ENCODE measurements at regions of chr18 and their contacts with region 1.

Region 1: GRCh38 chr18:62239475-62239874 is 52.4 kb downstream of the RELCH start:
- DNase-seq: no peak
- ATAC-seq: no peak
- H3K4me3 ChIP-seq: no peak overlapping the region
- H3K4me3 Mint-ChIP-seq: no peak overlapping the region
- H3K27ac ChIP-seq: no peak overlapping the region
- H3K27ac Mint-ChIP-seq: no peak overlapping the region
- H3K4me1 ChIP-seq: no peaks in the 10 kb centered on the region
- H3K4me1 Mint-ChIP-seq: peaks cover 2% of the 10 kb centered on the region
- H3K27me3 ChIP-seq: no peaks in the 10 kb centered on the region
- H3K27me3 Mint-ChIP-seq: no peaks in the 10 kb centered on the region
- CTCF ChIP-seq: no peak

Region 2: DNA sequence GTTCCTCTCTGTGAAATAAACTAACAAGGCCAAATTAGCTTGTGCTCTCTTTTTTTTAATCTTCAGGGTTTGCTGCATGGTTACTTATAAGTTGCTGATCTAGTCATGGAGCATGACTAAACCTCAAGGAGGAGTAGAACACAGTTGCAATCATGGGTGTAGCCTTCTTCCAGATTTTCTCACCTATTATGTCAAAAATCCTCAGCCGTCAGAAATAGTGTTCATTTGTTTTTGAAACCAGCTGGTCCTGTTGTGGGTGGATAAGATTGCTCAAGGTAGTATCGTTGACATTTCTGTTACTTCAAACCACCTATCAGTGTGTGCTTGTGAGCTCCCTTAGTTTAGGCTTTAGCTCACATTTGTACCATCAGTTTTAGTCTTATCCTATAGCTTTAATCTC is 41.2 kb before region 1 on chr18:
- CTCF ChIA-PET with region 1: no interaction called
- POLR2A ChIA-PET with region 1: no interaction called
- intact Hi-C with region 1: loop called (anchors 5 kb)
- DNase-seq: no peak
- ATAC-seq: no peak
- H3K4me3 ChIP-seq: no peak overlapping the region
- H3K4me3 Mint-ChIP-seq: no peak overlapping the region
- H3K27ac ChIP-seq: no peak overlapping the region
- H3K27ac Mint-ChIP-seq: no peak overlapping the region
- H3K4me1 ChIP-seq: peaks cover 0 to 4% of the 10 kb centered on the region in 2 donors
- H3K4me1 Mint-ChIP-seq: peaks cover 52% of the 10 kb centered on the region
- H3K27me3 ChIP-seq: no peaks in the 10 kb centered on the region
- H3K27me3 Mint-ChIP-seq: no peaks in the 10 kb centered on the region
- CTCF ChIP-seq: no peak

Region 3: DNA sequence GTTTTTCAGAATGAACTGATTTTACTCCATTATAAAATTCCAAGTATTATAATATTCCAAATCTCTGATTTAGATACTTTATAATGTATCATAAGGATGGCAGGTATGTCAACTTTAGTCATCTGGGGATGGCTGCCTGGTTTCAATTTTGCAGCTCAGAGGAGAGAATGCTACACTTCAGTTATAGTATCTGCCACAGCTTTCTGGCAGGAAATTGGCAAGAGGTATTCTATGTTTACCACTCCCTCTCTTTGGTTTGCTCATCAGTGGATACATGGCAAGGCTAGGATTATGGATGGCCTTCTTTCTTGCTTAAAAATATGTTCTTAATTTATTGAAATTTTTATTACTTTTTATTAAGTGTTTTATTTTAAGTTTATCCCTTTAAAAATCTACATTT is 18.6 kb after region 1 on chr18:
- CTCF ChIA-PET with region 1: no interaction called
- POLR2A ChIA-PET with region 1: no interaction called
- intact Hi-C with region 1: no loop called
- DNase-seq: no peak
- ATAC-seq: no peak
- H3K4me3 ChIP-seq: no peak overlapping the region
- H3K4me3 Mint-ChIP-seq: no peak overlapping the region
- H3K27ac ChIP-seq: no peak overlapping the region
- H3K27ac Mint-ChIP-seq: no peak overlapping the region
- H3K4me1 ChIP-seq: peaks cover 0 to 5% of the 10 kb centered on the region in 2 donors
- H3K4me1 Mint-ChIP-seq: peaks cover 13% of the 10 kb centered on the region
- H3K27me3 ChIP-seq: no peaks in the 10 kb centered on the region
- H3K27me3 Mint-ChIP-seq: no peaks in the 10 kb centered on the region
- CTCF ChIP-seq: no peak

Region 4: DNA sequence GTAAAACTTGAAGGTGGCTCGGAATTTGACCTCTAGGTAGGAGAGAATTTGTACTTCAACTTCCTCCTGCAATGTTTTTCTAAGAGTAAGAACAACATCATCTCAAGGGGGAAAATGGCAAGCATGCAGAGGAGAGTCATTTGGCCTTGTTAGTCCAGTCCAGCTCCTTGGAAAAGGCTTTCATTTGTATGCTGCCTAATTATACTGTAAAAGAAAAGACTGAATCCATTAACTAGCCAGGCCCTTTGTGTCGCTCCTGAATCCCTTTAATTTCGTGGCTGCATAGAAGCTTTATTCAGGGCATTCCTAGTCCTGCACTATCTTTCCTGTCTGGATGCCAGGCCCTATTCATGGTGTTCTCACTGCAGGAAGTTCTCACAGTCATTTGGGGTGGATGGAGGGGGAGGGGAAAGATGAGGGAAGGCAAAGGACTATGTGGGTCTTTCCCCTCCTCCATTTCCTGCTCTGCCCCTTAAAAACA is 511.9 kb after region 1 on chr18:
- CTCF ChIA-PET with region 1: no interaction called
- POLR2A ChIA-PET with region 1: no interaction called
- intact Hi-C with region 1: no loop called
- DNase-seq: no peak
- ATAC-seq: no peak
- H3K4me3 ChIP-seq: no peak overlapping the region
- H3K4me3 Mint-ChIP-seq: no peak overlapping the region
- H3K27ac ChIP-seq: no peak overlapping the region
- H3K27ac Mint-ChIP-seq: no peak overlapping the region
- H3K4me1 ChIP-seq: peaks cover 4 to 9% of the 10 kb centered on the region in 2 donors
- H3K4me1 Mint-ChIP-seq: peaks cover 18% of the 10 kb centered on the region
- H3K27me3 ChIP-seq: no peaks in the 10 kb centered on the region
- H3K27me3 Mint-ChIP-seq: no peaks in the 10 kb centered on the region
- CTCF ChIP-seq: no peak

Region 5: DNA sequence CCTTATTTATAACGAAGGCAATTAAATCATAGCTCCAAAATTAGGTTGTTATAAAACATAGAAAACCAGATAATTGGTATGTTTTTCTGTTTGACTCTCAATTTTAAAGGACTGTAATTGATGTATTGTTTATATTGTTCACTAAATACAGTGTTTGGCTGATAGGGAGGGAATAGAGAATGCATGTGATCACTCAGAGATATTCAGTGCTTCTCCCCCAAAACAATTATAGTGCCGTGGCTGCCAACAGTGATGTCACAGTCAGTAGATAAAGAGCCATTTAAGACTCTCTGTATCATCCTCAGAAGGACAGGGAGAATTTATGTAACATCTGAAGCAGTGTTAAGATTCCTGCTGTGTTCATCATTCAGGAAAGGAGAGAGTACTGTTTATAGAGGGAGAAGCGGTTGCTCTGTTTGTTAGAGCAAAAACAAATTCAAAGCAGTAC is 545.5 kb after region 1 on chr18:
- CTCF ChIA-PET with region 1: no interaction called
- POLR2A ChIA-PET with region 1: no interaction called
- intact Hi-C with region 1: no loop called
- DNase-seq: no peak
- ATAC-seq: no peak
- H3K4me3 ChIP-seq: no peak overlapping the region
- H3K4me3 Mint-ChIP-seq: peak overlapping the region; percentile 54
- H3K27ac ChIP-seq: no peak overlapping the region
- H3K27ac Mint-ChIP-seq: no peak overlapping the region
- H3K4me1 ChIP-seq: peaks cover 3 to 8% of the 10 kb centered on the region in 2 donors
- H3K4me1 Mint-ChIP-seq: peaks cover 25% of the 10 kb centered on the region
- H3K27me3 ChIP-seq: no peaks in the 10 kb centered on the region
- H3K27me3 Mint-ChIP-seq: no peaks in the 10 kb centered on the region
- CTCF ChIP-seq: no peak